Heart left ventricle (tissue), 16 donors: ENCODE measurements at regions of chr19 and their contacts with region 1.

Region 1: GRCh38 chr19:34041925-34042521 is 130.3 kb upstream of the LSM14A start:
- DNase-seq: peak; percentile 47 to 80 (median 50)
- ATAC-seq: peak in 2 of 4 donors; percentile 31 to 44
- H3K4me3 ChIP-seq: no peak overlapping the region
- H3K27ac ChIP-seq: no peak overlapping the region
- H3K4me1 ChIP-seq: no peaks in the 10 kb centered on the region
- H3K27me3 ChIP-seq: peaks cover 0 to 6% (median 0%) of the 10 kb centered on the region in 9 donors
- CTCF ChIP-seq: peak; percentile 66 to 89 (median 82)
- POLR2A ChIP-seq: no peak

Region 2: DNA sequence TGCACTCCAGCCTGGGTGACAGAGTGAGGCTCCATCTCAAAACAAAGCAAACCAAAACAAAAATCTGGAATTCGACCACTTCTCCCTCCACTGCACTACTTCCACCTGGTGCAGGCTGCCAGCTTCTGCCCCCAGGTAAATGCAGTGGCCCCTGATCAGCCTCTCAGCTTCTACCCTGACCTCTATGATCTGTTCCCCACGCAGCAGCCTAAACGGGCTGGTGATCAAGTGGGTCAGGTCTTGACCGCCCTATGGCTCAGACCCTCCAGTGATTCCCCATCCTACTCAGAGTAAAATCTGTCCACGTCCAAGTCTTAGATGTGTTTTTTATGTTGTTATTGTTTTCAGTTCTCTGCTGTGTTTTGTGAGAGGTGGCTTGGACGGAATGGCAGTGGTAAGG is 81.5 kb before region 1 on chr19:
- intact Hi-C with region 1: no loop called
- DNase-seq: no peak
- ATAC-seq: no peak
- H3K4me3 ChIP-seq: no peak overlapping the region
- H3K27ac ChIP-seq: no peak overlapping the region
- H3K4me1 ChIP-seq: no peaks in the 10 kb centered on the region
- H3K27me3 ChIP-seq: peaks cover 0 to 13% (median 0%) of the 10 kb centered on the region in 9 donors
- CTCF ChIP-seq: no peak
- POLR2A ChIP-seq: no peak

Region 3: DNA sequence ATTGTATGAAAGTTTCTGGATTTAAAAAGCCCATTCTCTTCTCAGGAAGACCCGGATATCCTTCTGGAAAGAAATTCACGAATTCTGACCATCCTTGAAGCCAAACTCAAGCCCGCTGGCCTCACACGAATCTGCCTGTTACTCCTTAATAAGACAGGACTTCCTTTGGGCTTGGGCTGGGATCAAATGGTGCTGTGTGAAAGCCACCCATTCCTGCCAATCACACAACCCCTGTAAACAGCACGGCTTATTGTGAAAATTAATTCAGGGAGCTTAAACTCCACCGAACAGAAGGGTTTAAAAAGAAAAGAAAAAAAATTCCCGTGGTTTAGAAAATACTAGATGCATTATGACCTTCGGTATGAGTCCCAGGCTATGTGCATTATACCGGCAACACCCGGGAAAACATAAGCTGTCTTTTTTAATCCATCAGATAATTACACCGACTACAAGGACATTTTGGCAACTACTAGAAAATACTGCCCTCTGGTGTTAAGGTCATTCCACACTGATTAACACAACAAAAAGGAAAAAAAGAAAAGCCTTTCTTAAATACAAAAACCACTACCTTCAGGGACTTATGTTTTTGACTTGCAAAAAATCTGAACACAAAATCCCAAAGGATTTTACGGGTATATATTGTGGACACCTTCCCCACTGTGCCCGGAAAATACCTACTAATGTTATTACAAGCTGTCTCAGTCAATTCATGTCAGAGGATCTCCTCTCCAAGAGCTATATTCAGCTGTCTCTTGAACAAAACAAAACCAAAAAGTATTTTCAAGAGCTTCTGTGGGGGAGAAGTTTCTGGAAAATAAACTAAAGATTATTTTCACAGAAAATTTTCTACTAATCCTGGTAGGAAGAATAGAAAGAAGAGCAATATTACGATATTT is 54.2 kb after region 1 on chr19:
- intact Hi-C with region 1: loop called in 1 of 10 experiments (anchors 2 kb)
- DNase-seq: no peak
- ATAC-seq: peak in 1 of 4 donors; percentile 58
- H3K4me3 ChIP-seq: no peak overlapping the region
- H3K27ac ChIP-seq: no peak overlapping the region
- H3K4me1 ChIP-seq: peaks cover 0 to 7% (median 0%) of the 10 kb centered on the region in 12 donors
- H3K27me3 ChIP-seq: peaks cover 0 to 12% (median 0%) of the 10 kb centered on the region in 9 donors
- CTCF ChIP-seq: peak; percentile 49 to 75 (median 62)
- POLR2A ChIP-seq: no peak

Region 4: DNA sequence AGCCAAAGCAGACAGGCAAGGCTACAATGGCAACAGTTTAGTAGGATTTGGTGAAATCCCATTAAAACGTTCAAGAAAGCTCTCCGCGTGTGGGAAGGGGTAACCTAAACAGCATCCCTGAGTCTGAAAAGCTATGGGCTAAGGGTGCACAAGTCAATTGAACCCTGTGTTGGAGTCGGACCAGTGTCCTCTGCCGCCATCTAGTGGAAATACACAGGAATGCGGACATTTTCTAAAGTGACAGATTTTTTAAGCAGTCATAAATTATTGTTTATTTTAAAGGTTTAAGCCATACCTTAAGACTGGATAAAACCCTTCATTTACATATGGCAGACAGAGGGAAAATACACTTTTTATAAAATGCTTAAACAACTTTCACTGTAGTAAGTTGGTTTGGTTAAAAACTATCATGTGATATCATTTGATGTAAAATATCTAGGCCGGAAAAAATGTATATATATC is 103.7 kb after region 1 on chr19:
- intact Hi-C with region 1: loop called in 8 of 10 experiments (anchors 2 to 10 kb)
- DNase-seq: peak in 2 of 5 donors; percentile 13 to 32
- ATAC-seq: peak in 1 of 4 donors; percentile 46
- H3K4me3 ChIP-seq: no peak overlapping the region
- H3K27ac ChIP-seq: no peak overlapping the region
- H3K4me1 ChIP-seq: no peaks in the 10 kb centered on the region
- H3K27me3 ChIP-seq: peaks cover 0 to 3% (median 0%) of the 10 kb centered on the region in 9 donors
- CTCF ChIP-seq: peak; percentile 58 to 87 (median 78)
- POLR2A ChIP-seq: no peak